B cell (primary cell): ENCODE measurements at regions of chr11 and their contacts with region 1.

Region 1: DNA sequence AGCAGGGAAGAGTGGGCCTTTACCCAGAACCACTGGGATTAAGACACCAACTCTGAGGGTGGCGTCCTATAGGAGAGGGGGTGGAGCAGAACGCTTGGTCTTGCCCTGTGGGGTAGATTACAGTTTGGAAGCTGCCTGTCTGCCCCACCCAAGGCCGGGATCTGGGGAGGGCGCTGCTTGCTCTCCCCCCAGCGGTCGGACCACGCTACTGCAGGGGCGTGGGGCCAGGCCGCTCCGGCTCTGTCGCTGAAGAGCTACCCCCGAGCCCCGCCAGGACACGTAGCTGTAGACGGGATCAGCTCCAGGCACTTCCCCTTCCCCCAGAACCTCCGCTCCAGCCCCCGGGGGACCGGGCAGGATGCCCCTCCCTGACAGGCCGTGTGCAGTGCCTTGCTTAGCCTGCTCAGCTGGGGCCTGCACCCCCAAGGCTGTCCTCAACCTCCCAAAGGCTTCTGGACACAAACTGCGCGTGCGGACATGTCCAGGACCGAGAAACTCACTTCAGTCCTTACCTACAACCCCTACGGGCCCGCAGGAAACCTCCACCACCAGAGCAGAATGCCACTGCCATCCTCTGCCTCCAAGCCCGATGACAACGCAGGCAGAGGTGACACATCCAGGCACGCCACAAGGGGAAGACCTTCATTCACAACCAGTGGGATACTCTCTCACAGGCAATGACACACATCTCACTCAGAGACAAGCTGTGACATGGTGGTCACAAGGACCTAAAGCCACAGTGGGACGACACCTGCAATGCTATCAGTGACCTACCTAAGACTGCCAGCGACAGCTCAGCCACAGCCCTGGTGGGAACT is 3.6 kb downstream of the AHNAK start:
- DNase-seq: peak; percentile 84
- ATAC-seq: peak; percentile 44
- H3K4me3 ChIP-seq: peak overlapping the region in 4 of 5 experiments; percentile 38 to 99 (median 94)
- H3K4me3 Mint-ChIP-seq: peak overlapping the region; percentile 97
- H3K27ac ChIP-seq: peak overlapping the region; percentile 91 to 94
- H3K27ac Mint-ChIP-seq: peak overlapping the region; percentile 97
- H3K4me1 ChIP-seq: peaks cover 70 to 87% of the 10 kb centered on the region in 2 donors
- H3K4me1 Mint-ChIP-seq: peaks cover 84% of the 10 kb centered on the region
- H3K27me3 ChIP-seq: no peaks in the 10 kb centered on the region
- H3K27me3 Mint-ChIP-seq: no peaks in the 10 kb centered on the region
- CTCF ChIP-seq: peak; percentile 98

Region 2: DNA sequence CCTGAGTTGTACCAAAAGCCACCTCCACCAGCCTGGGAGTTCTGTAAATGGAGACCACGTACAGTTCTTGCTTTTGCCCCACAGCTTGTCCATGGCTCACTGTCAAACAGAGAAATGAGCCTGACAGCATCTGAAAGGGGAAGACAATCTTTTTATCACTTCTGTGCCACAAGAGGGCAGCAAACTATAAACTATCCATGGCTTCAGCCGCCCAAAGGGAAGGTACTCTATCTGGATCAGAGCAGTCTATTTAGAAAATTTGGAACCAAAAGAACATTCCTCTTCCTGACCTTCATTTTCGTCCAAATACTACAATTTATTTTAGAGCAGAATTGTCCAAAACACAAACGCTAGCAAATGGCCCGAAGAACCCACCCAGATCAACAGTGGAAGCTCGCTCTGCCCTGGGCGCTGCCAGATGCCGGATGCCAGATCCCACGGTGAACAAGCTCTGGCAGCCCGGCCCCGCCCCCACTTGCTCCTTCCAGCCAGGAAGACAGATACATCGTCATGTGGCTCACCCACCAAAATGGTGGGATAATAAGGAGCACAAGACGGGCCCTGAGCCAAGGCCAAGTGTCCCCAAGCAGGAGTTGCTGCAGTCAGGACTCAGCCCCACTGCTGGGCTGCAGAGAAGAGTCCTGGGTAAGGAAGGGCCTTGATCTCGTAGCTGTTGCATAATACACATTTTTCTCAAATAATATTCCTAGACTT is 148.0 kb before region 1 on chr11:
- CTCF ChIA-PET with region 1: interaction called, 19 read pairs
- POLR2A ChIA-PET with region 1: no interaction called
- intact Hi-C with region 1: no loop called
- DNase-seq: peak; percentile 81
- ATAC-seq: peak; percentile 68
- H3K4me3 ChIP-seq: no peak overlapping the region
- H3K4me3 Mint-ChIP-seq: no peak overlapping the region
- H3K27ac ChIP-seq: no peak overlapping the region
- H3K27ac Mint-ChIP-seq: no peak overlapping the region
- H3K4me1 ChIP-seq: no peaks in the 10 kb centered on the region
- H3K4me1 Mint-ChIP-seq: peaks cover 2% of the 10 kb centered on the region
- H3K27me3 ChIP-seq: peaks cover 0 to 5% (median 0%) of the 10 kb centered on the region in 4 experiments
- H3K27me3 Mint-ChIP-seq: peaks cover 11% of the 10 kb centered on the region
- CTCF ChIP-seq: peak; percentile 79

Region 3: GRCh38 chr11:62444236-62444833 is 98.6 kb before region 1 on chr11:
- CTCF ChIA-PET with region 1: interaction called, 20 read pairs
- POLR2A ChIA-PET with region 1: interaction called, 4 read pairs
- intact Hi-C with region 1: no loop called
- DNase-seq: peak; percentile 85
- ATAC-seq: peak; percentile 88
- H3K4me3 ChIP-seq: peak overlapping the region in 4 of 5 experiments; percentile 30 to 66 (median 60)
- H3K4me3 Mint-ChIP-seq: peak overlapping the region; percentile 94
- H3K27ac ChIP-seq: peak overlapping the region; percentile 81 to 85
- H3K27ac Mint-ChIP-seq: peak overlapping the region; percentile 98
- H3K4me1 ChIP-seq: peaks cover 24 to 29% of the 10 kb centered on the region in 2 donors
- H3K4me1 Mint-ChIP-seq: peaks cover 29% of the 10 kb centered on the region
- H3K27me3 ChIP-seq: peaks cover 0 to 5% (median 0%) of the 10 kb centered on the region in 4 experiments
- H3K27me3 Mint-ChIP-seq: peaks cover 5% of the 10 kb centered on the region
- CTCF ChIP-seq: no peak

Region 4: GRCh38 chr11:62508268-62509058 is 34.5 kb before region 1 on chr11:
- CTCF ChIA-PET with region 1: interaction called, 15 read pairs
- POLR2A ChIA-PET with region 1: no interaction called
- intact Hi-C with region 1: no loop called
- DNase-seq: peak; percentile 70
- ATAC-seq: peak; percentile 66
- H3K4me3 ChIP-seq: no peak overlapping the region
- H3K4me3 Mint-ChIP-seq: no peak overlapping the region
- H3K27ac ChIP-seq: no peak overlapping the region
- H3K27ac Mint-ChIP-seq: peak overlapping the region; percentile 26
- H3K4me1 ChIP-seq: peaks cover 4 to 11% of the 10 kb centered on the region in 2 donors
- H3K4me1 Mint-ChIP-seq: peaks cover 12% of the 10 kb centered on the region
- H3K27me3 ChIP-seq: peaks cover 0 to 4% (median 0%) of the 10 kb centered on the region in 4 experiments
- H3K27me3 Mint-ChIP-seq: peaks cover 5% of the 10 kb centered on the region
- CTCF ChIP-seq: peak; percentile 29

Region 5: GRCh38 chr11:62573592-62574362 is 30.8 kb after region 1 on chr11 and contains the start of gene EEF1G:
- CTCF ChIA-PET with region 1: interaction called, 10 read pairs
- POLR2A ChIA-PET with region 1: interaction called, 5 read pairs
- intact Hi-C with region 1: no loop called
- DNase-seq: peak; percentile 99
- ATAC-seq: peak; percentile 93
- H3K4me3 ChIP-seq: peak within 1 kb of the TSS; percentile 74 to 99 (median 80)
- H3K4me3 Mint-ChIP-seq: peak within 1 kb of the TSS; percentile 92
- H3K27ac ChIP-seq: peak within 1 kb of the TSS; percentile 84 to 88
- H3K27ac Mint-ChIP-seq: peak within 1 kb of the TSS; percentile 95
- H3K4me1 ChIP-seq: peaks cover 12 to 25% of the 10 kb centered on the region in 2 donors
- H3K4me1 Mint-ChIP-seq: peaks cover 50% of the 10 kb centered on the region
- H3K27me3 ChIP-seq: no peaks in the 10 kb centered on the region
- H3K27me3 Mint-ChIP-seq: no peaks in the 10 kb centered on the region
- CTCF ChIP-seq: no peak
- total RNA-seq, gene EEF1G: 1,778 and 1,867 TPM in 2 replicates